Esophagus muscularis mucosa (tissue), 4 donors: ENCODE measurements at regions of chr18 and their contacts with region 1.

Region 1: DNA sequence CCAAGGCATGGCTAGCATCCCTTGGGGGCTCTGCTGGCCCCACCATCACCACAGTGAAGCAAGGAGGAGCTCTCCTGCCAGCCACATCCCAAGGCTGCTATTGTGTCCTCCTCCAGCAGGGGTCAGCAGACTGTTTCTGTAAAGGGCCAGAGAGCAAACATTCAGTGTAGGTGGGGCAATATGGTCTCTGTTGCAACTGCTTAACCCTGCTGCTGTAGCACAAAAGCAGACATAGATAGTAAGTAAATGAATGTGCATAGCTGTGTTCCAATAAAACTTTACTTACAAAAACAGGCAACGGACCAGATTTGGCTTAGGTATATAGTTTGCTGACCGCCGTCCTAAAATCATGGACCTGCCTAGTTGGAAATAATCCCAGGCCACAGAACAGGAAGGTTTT is 36.4 kb upstream of the ZBTB7C start:
- DNase-seq: no peak
- H3K4me3 ChIP-seq: no peak overlapping the region
- H3K27ac ChIP-seq: no peak overlapping the region
- H3K4me1 ChIP-seq: peaks cover 9 to 40% (median 28%) of the 10 kb centered on the region in 4 donors
- H3K27me3 ChIP-seq: no peaks in the 10 kb centered on the region
- CTCF ChIP-seq: peak; percentile 77 to 88 (median 78)
- EP300 ChIP-seq: no peak
- POLR2A ChIP-seq: no peak

Region 2: DNA sequence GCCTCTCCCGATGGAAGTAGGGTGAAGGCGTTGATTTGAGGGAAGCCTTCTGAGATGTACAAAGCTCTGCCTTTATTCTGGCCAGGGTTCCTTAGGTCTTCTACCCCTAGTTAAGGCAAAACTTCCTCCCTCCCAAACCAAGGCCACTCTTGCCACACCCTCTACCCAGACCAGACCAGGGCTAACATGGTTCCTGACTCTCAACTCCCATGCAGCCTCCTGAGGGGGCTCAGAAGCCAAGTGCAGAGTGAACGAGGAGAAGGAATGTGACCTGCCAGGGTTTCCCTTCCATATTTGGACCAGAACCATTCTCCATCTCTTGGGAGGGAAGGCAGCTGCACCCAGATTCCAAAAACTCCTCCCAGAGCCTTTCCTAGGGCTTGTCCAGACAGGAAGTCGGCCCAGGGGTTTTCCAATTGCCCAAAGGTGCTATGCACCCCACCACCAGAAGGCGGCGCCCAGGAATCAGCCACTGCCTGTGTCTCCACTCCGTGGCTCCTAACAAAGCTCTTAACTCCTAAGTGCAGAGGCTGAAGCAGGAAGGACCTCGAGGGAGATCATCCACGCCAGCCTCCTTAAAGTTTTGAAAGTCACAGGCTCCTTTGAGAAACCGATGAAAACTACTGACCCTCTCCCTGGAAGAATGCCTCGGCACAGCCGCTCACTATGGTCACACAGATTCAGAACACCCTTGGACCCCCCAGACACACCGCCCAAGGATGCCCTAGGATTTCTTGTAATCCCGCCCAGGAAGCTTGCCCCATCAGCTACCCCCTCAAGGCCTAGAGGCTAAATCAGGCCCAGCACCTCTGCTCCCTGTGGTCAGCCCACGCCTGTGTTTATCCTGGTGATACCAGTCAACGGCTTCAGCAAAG is 672.9 kb before region 1 on chr18:
- intact Hi-C with region 1: loop called (anchors 10 kb)
- DNase-seq: peak; percentile 89
- H3K4me3 ChIP-seq: no peak overlapping the region
- H3K27ac ChIP-seq: no peak overlapping the region
- H3K4me1 ChIP-seq: no peaks in the 10 kb centered on the region
- H3K27me3 ChIP-seq: no peaks in the 10 kb centered on the region
- CTCF ChIP-seq: peak; percentile 70 to 78 (median 72)
- EP300 ChIP-seq: no peak
- POLR2A ChIP-seq: no peak

Region 3: GRCh38 chr18:48030616-48031480 is 414.7 kb before region 1 on chr18:
- intact Hi-C with region 1: loop called (anchors 2 kb)
- DNase-seq: no peak
- H3K4me3 ChIP-seq: no peak overlapping the region
- H3K27ac ChIP-seq: no peak overlapping the region
- H3K4me1 ChIP-seq: peaks cover 7 to 37% (median 31%) of the 10 kb centered on the region in 4 donors
- H3K27me3 ChIP-seq: no peaks in the 10 kb centered on the region
- CTCF ChIP-seq: peak; percentile 76 to 84 (median 76)
- EP300 ChIP-seq: no peak
- POLR2A ChIP-seq: no peak

Region 4: GRCh38 chr18:48230467-48231113 is 214.9 kb before region 1 on chr18:
- intact Hi-C with region 1: loop called (anchors 5 kb)
- DNase-seq: no peak
- H3K4me3 ChIP-seq: no peak overlapping the region
- H3K27ac ChIP-seq: peak overlapping the region in 1 of 4 donors; percentile 3
- H3K4me1 ChIP-seq: peaks cover 18 to 57% (median 51%) of the 10 kb centered on the region in 4 donors
- H3K27me3 ChIP-seq: no peaks in the 10 kb centered on the region
- CTCF ChIP-seq: peak; percentile 42 to 57 (median 43)
- EP300 ChIP-seq: no peak
- POLR2A ChIP-seq: no peak

Region 5: GRCh38 chr18:48345596-48345995 is 99.9 kb before region 1 on chr18:
- intact Hi-C with region 1: loop called (anchors 10 kb)
- DNase-seq: no peak
- H3K4me3 ChIP-seq: no peak overlapping the region
- H3K27ac ChIP-seq: no peak overlapping the region
- H3K4me1 ChIP-seq: peaks cover 13 to 35% (median 27%) of the 10 kb centered on the region in 4 donors
- H3K27me3 ChIP-seq: no peaks in the 10 kb centered on the region
- CTCF ChIP-seq: peak; percentile 26 to 36 (median 32)
- EP300 ChIP-seq: no peak
- POLR2A ChIP-seq: no peak